ENCODE measurements at regions of chr19 and their contacts with region 1.

Region 1: GRCh38 chr19:55653758-55654539 is 886 bp upstream of the U2AF2 start:
- DNase-seq: peak; percentile 99
- ATAC-seq: peak; percentile 82

Region 2: GRCh38 chr19:55674841-55675660 is 21.1 kb after region 1 on chr19 and contains the start of gene EPN1:
- intact Hi-C with region 1: loop called (anchors 1 kb)
- DNase-seq: peak; percentile 97
- ATAC-seq: peak; percentile 91
- total RNA-seq, gene EPN1: 213 TPM

Region 3: GRCh38 chr19:55809381-55810058 is 155.6 kb after region 1 on chr19:
- intact Hi-C with region 1: no loop called
- DNase-seq: no peak
- ATAC-seq: no peak

Measured in Right ventricle myocardium inferior (tissue), 1 donor.